IMR-90 (cell line): ENCODE measurements at regions of chr17 and their contacts with region 1.

Region 1: DNA sequence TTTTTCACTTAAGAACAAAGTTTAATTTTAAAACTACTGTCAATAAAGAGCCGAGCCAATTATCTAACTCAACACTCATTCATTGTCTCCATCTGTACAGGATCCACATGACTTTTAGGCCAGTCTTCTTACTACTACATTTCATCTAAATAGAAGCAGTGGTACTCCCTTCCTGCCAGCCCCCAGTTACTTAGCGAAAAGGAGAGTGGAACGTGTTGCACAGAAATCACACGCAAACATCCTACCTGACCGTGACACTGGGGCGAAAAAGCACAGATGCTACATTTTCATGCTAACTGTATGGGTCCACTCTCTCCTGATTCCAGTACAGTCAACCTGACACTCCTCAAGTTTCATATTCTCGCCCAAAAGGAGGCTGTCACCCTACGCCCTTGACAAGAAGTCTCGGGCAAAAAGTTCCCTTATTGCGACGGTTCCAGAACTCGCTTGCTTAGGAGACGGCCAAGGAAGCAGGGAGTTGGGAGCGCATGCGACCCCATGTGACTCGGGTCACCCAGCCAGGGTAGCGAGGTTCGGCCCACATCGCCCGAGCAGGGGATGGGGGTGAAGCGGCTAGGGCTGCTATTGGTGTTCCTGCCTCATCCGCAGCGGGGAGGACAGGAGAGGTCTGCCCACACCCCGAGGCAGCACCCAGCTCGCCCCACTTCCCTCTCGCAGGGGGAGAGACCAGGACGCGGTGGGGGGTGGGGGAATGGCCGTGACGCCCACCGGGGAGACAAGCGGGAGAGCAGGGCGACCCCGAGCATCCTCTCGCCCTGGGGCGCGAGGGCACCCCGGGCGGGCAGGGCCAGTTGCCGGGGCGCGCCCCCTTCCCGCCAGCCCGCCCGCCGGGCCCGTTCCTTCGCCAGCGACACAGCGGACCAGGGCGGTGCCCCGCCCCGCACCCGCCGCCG is 935 bp downstream of the GNA13 start:
- DNase-seq: peak; percentile 22
- ATAC-seq: peak; percentile 38
- H3K4me3 ChIP-seq: peak overlapping the region; percentile 91
- H3K27ac ChIP-seq: peak overlapping the region; percentile 100
- H3K4me1 ChIP-seq: peaks cover 2% of the 10 kb centered on the region; the same call in 1 of the 2 replicates
- H3K27me3 ChIP-seq: no peaks in the 10 kb centered on the region
- CTCF ChIP-seq: no peak
- POLR2A ChIP-seq: no peak
- RAD21 ChIP-seq: no peak; the same call in none of the 2 replicates

Region 2: GRCh38 chr17:65100316-65101140 is 44.9 kb after region 1 on chr17:
- CTCF ChIA-PET with region 1: interaction called, 6 read pairs
- POLR2A ChIA-PET with region 1: interaction called, 3 read pairs
- dilution Hi-C with region 1: no loop called
- in situ Hi-C with region 1: no loop called
- intact Hi-C with region 1: loop called (anchors 1 kb)
- DNase-seq: peak; percentile 47
- ATAC-seq: peak; percentile 98
- H3K4me3 ChIP-seq: peak overlapping the region; percentile 51
- H3K27ac ChIP-seq: no peak overlapping the region
- H3K4me1 ChIP-seq: peaks cover 7% of the 10 kb centered on the region
- H3K27me3 ChIP-seq: no peaks in the 10 kb centered on the region
- CTCF ChIP-seq: peak; percentile 85
- POLR2A ChIP-seq: no peak
- RAD21 ChIP-seq: peak; percentile 62

Region 3: GRCh38 chr17:65117384-65118035 is 61.9 kb after region 1 on chr17:
- CTCF ChIA-PET with region 1: no interaction called
- POLR2A ChIA-PET with region 1: interaction called, 20 read pairs
- dilution Hi-C with region 1: no loop called
- in situ Hi-C with region 1: no loop called
- intact Hi-C with region 1: loop called (anchors 5 kb)
- DNase-seq: no peak
- ATAC-seq: no peak
- H3K4me3 ChIP-seq: no peak overlapping the region
- H3K27ac ChIP-seq: no peak overlapping the region
- H3K4me1 ChIP-seq: no peaks in the 10 kb centered on the region
- H3K27me3 ChIP-seq: peaks cover 13% of the 10 kb centered on the region
- CTCF ChIP-seq: no peak
- POLR2A ChIP-seq: no peak
- RAD21 ChIP-seq: no peak

Region 4: GRCh38 chr17:65122836-65123756 is 67.5 kb after region 1 on chr17:
- CTCF ChIA-PET with region 1: no interaction called
- POLR2A ChIA-PET with region 1: interaction called, 20 read pairs
- dilution Hi-C with region 1: no loop called
- in situ Hi-C with region 1: no loop called
- intact Hi-C with region 1: loop called (anchors 5 kb)
- DNase-seq: peak; percentile 90
- ATAC-seq: peak; percentile 97
- H3K4me3 ChIP-seq: peak overlapping the region; percentile 55
- H3K27ac ChIP-seq: peak overlapping the region; percentile 98
- H3K4me1 ChIP-seq: peaks cover 8% of the 10 kb centered on the region
- H3K27me3 ChIP-seq: no peaks in the 10 kb centered on the region
- CTCF ChIP-seq: no peak
- POLR2A ChIP-seq: peak; percentile 83
- RAD21 ChIP-seq: no peak

Region 5: DNA sequence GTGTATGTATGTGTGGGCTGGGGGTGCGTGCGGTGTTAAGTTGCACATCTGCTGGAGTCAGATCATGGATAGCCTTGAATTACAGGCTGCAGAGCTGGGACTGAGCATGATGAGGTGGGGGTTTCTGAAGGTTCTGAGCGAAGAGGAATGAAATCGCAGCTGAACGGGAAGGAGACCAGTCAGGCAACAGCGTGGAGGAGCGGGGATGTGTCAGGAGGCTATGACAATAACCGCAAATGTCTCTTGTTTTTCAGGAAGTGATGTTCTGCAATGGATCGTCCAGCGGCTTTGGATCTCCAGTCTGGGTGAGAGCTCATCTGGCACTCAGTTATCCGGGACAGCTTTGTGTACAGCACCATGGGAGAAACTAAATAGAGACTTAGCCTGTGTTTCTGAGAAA is 102.4 kb after region 1 on chr17:
- CTCF ChIA-PET with region 1: no interaction called
- POLR2A ChIA-PET with region 1: no interaction called
- dilution Hi-C with region 1: no loop called
- in situ Hi-C with region 1: no loop called
- intact Hi-C with region 1: no loop called
- DNase-seq: no peak
- ATAC-seq: no peak
- H3K4me3 ChIP-seq: no peak overlapping the region
- H3K27ac ChIP-seq: no peak overlapping the region
- H3K4me1 ChIP-seq: peaks cover 9% of the 10 kb centered on the region
- H3K27me3 ChIP-seq: no peaks in the 10 kb centered on the region
- CTCF ChIP-seq: no peak
- POLR2A ChIP-seq: no peak
- RAD21 ChIP-seq: no peak